Activated CD4-positive, alpha-beta T cell treated with anti-CD3 and anti-CD28 coated beads, Interleukin-2, amount 10 ng/mL, durations not matched to agents 24 days and 14 days (primary cell): ENCODE measurements at regions of chr7 and their contacts with region 1.

Region 1: GRCh38 chr7:37342688-37343471 is 105.8 kb downstream of the ELMO1 start:
- DNase-seq: peak; percentile 89
- H3K4me3 Mint-ChIP-seq: peak overlapping the region; percentile 92
- H3K27ac Mint-ChIP-seq: peak overlapping the region; percentile 99
- H3K4me1 Mint-ChIP-seq: peaks cover 61% of the 10 kb centered on the region
- H3K27me3 Mint-ChIP-seq: no peaks in the 10 kb centered on the region

Region 2: GRCh38 chr7:37284805-37285231 is 58.1 kb before region 1 on chr7:
- intact Hi-C with region 1: loop called (anchors 2 kb)
- DNase-seq: peak; percentile 82
- H3K4me3 Mint-ChIP-seq: no peak overlapping the region
- H3K27ac Mint-ChIP-seq: no peak overlapping the region
- H3K4me1 Mint-ChIP-seq: peaks cover 34% of the 10 kb centered on the region
- H3K27me3 Mint-ChIP-seq: no peaks in the 10 kb centered on the region

Region 3: DNA sequence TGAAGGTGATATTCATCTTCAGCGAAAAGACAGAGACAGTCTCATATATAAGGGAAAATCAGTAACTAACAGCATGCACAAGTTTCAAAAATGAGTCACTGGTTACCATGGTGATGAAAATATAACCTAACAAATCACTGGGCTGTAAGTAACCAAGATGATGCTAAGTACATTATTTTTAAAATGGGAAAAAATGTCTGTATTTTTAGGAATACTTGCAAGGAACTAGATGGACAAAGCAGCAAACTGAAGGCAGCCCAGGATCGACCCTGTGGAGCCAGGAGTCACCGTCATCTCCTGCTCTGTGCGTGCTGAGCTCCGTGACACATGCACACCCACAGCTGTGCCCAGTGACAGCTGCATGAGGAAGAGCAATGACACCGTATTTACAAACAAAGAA is 31.5 kb before region 1 on chr7:
- intact Hi-C with region 1: loop called (anchors 1 kb)
- DNase-seq: no peak
- H3K4me3 Mint-ChIP-seq: peak overlapping the region; percentile 49
- H3K27ac Mint-ChIP-seq: peak overlapping the region; percentile 92
- H3K4me1 Mint-ChIP-seq: peaks cover 48% of the 10 kb centered on the region
- H3K27me3 Mint-ChIP-seq: no peaks in the 10 kb centered on the region